Esophagus squamous epithelium (tissue), 5 donors: ENCODE measurements at regions of chr10 and their contacts with region 1.

Region 1: DNA sequence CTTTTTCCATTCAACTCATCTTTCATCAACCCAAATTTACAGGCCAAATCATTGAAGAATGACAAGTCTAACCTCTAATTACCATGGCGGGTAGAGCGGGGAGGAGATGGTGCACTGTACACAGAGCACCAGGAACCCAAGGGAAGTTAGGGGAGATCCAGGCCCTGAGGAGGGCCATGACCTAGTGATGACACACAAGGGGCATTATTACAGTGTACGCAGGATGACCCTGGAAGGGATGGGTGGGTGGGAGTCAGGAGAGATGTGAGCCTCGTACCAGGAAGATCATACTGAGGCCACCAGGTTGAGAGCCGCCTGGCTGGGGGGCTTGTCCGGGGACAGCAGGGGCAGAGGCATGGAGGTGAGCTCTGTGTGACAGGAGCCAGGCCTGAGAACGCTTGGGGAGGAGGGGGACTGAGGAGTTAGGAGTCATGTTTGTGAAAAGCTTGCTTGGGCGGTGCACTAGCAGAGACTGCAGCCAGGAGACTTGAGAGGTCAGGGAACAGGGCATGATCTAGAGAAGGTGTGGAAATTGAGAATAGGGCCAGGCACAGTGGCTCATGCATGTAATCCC is 89.5 kb upstream of the CCNY start:
- DNase-seq: no peak
- H3K4me3 ChIP-seq: no peak overlapping the region
- H3K27ac ChIP-seq: no peak overlapping the region
- H3K4me1 ChIP-seq: no peaks in the 10 kb centered on the region
- H3K27me3 ChIP-seq: peaks cover 0 to 8% (median 0%) of the 10 kb centered on the region in 4 donors
- CTCF ChIP-seq: no peak
- POLR2A ChIP-seq: no peak

Region 2: GRCh38 chr10:35563261-35563891 is 316.5 kb after region 1 on chr10:
- intact Hi-C with region 1: loop called (anchors 10 kb)
- DNase-seq: no peak
- H3K4me3 ChIP-seq: no peak overlapping the region
- H3K27ac ChIP-seq: no peak overlapping the region
- H3K4me1 ChIP-seq: peaks cover 0 to 18% (median 11%) of the 10 kb centered on the region in 3 donors
- H3K27me3 ChIP-seq: no peaks in the 10 kb centered on the region
- CTCF ChIP-seq: peak; percentile 79 to 94 (median 88)
- POLR2A ChIP-seq: no peak